Activated naive CD4-positive, alpha-beta T cell treated with anti-CD3 and anti-CD28 coated beads, Interleukin-2, amount 10 ng/mL, durations not matched to agents 7 days and 5 days (primary cell): ENCODE measurements at regions of chr5 and their contacts with region 1.

Region 1: GRCh38 chr5:151051066-151051930 is 29.5 kb downstream of the TNIP1 start:
- DNase-seq: peak; percentile 82
- H3K4me3 Mint-ChIP-seq: no peak overlapping the region
- H3K27ac Mint-ChIP-seq: peak overlapping the region; percentile 17
- H3K4me1 Mint-ChIP-seq: peaks cover 7% of the 10 kb centered on the region
- H3K27me3 Mint-ChIP-seq: no peaks in the 10 kb centered on the region

Region 2: GRCh38 chr5:151110122-151110681 is 58.9 kb after region 1 on chr5:
- CTCF ChIA-PET with region 1: interaction called, 264 read pairs
- DNase-seq: no peak
- H3K4me3 Mint-ChIP-seq: no peak overlapping the region
- H3K27ac Mint-ChIP-seq: no peak overlapping the region
- H3K4me1 Mint-ChIP-seq: no peaks in the 10 kb centered on the region
- H3K27me3 Mint-ChIP-seq: no peaks in the 10 kb centered on the region